Sigmoid colon (tissue), 7 donors: ENCODE measurements at regions of chr3 and their contacts with region 1.

Region 1: GRCh38 chr3:149086232-149086988 is at the start of gene HLTF:
- DNase-seq: peak; percentile 97
- H3K4me3 ChIP-seq: peak within 1 kb of the TSS; percentile 55 to 86 (median 68)
- H3K27ac ChIP-seq: peak within 1 kb of the TSS; percentile 79 to 91 (median 80)
- H3K4me1 ChIP-seq: peaks cover 0 to 18% (median 13%) of the 10 kb centered on the region in 4 donors
- H3K27me3 ChIP-seq: no peaks in the 10 kb centered on the region
- CTCF ChIP-seq: no peak
- EP300 ChIP-seq: no peak
- POLR2A ChIP-seq: peak; percentile 37 to 66
- total RNA-seq, gene HLTF: 24.4 to 43.9 (median 29.9) TPM

Region 2: DNA sequence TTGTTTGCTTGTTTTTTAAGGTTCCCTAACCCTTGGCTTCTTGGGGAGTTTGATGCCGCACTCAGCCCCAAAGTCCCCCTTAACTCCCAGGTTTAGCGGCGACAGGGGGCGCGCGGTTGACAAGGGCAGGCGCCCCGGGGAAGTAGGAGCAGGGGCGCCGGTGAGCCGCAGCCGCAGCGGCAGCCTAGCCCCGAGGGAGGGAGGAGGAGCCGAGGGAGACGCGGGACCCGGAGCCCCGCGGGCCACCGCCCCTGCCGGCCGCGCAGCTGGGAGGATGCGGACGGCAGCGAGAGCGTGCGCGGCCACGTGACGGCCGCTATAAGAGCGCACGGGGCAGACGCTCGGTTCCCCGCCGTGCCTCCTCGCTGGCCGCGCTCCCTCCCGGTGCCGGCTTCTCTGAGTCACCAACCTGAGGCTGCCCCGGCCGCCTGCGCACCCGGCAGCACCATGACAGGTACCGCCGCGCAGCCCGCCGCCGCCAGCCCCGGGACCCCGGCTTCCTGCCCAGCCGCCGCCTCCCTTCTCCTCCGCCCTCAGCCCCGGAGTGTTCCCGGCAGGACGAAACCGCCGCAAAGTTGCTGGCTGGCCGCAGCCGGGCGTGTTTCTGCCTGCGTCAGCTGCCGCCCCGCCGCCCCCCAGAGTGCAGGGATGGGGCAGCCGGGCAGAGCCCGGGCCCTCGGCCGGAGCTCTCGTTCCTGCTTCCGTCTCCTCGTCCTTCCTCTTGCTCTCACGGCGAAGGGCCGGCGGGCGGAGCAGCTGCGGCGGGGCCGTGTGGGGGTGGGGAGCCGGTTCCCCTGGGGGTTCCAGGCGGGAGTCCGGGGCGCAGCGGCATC is 95.0 kb before region 1 on chr3 and contains the start of gene GYG1:
- intact Hi-C with region 1: loop called (anchors 10 kb)
- DNase-seq: peak; percentile 93
- H3K4me3 ChIP-seq: peak within 1 kb of the TSS; percentile 92 to 99 (median 94)
- H3K27ac ChIP-seq: peak within 1 kb of the TSS; percentile 98 to 99 (median 98)
- H3K4me1 ChIP-seq: peaks cover 0 to 29% (median 28%) of the 10 kb centered on the region in 4 donors
- H3K27me3 ChIP-seq: no peaks in the 10 kb centered on the region
- CTCF ChIP-seq: peak in 2 of 4 experiments; percentile 19 to 36
- EP300 ChIP-seq: no peak
- POLR2A ChIP-seq: peak; percentile 58 to 76
- total RNA-seq, gene GYG1: 142 to 213 (median 186) TPM